MCF 10A (cell line): ENCODE measurements at regions of chr6 and their contacts with region 1.

Region 1: DNA sequence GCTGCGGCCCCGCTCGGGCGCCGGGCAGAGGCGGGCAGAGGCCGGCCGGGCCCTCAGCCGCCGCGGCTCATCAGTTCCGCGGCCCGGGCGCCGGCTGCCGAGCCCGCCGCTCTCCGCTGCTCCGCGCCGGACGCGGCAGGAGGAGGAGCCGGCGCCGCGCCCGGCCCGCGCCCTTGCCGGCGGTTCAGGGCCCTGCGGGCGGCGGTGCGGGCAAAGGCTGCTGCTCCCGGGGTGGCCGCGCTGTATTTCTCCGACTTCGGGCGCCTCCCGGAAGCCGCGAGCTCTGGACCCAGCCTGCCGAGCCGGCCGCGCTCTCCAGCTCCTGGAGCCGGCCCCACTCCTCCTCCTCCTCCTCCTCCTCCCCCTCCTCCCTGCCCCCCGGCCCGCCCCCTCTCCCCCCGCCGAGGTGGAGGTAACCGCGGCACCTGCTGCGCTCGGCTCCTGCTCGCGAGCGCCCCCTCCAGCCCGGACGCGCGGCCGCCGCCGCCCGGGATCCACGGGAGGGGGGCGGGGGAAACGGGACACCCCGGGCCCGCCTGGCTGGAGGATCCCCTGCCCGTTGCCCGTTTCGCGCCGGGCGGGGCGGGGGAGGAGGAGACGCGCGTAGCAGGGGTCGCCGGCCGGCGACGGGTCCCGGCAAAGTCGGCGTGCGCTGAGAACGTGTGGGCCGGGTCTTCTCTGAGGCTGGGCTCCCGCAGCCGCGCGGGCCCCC is at the start of gene SLC22A23:
- DNase-seq: peak; percentile 69
- H3K4me3 Mint-ChIP-seq: peak within 1 kb of the TSS; percentile 75
- H3K27ac Mint-ChIP-seq: no peak within 1 kb of the TSS
- H3K4me1 Mint-ChIP-seq: peaks cover 7% of the 10 kb centered on the region
- H3K27me3 Mint-ChIP-seq: no peaks in the 10 kb centered on the region
- CTCF ChIP-seq: peak; percentile 79
- total RNA-seq, gene SLC22A23: 11.5 and 11.9 TPM in 2 replicates

Region 2: DNA sequence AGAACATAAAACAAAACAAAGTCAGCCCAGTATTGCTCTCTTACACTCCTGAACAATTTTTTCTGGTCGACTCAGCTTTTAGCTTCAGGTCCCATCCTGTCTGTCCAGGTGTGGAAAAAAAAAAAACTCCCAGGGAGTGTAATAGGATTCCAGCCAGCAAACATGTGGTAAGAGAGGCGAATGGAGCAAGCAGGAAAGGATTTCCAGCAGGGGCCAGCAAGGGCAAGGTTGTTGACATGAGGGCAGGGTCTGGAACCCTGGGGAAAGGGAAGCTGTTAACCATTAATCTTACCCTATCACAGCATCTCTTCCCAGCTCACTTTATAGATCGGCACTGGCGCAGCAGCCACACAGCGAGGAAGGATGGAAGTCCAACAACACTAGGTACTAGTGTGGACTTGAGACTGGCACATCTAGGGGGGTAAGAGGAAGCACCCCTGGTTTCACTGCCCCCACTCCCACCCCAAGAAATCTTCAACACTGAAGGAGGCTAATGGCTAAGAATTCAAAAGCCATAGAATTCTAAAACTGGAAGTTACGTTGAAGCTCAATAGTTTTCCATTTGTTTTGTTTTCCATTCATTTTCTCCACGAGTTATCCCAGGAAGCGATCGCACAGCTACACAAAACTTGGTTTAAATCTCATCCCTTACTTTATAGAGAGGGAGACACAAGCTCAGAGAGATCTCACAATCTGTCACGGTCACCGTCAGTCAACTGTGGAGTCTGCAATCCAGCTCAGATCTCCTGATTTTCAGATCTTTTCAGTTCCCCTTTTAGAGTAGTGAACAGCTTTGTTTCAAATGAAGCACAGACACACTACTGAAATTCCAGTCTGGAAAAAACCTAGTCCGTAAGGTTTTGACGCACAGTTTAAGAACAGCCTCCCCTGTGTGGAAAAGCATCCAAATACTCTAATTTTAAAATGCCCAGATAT is 53.4 kb before region 1 on chr6:
- CTCF ChIA-PET with region 1: interaction called, 15 read pairs
- POLR2A ChIA-PET with region 1: interaction called, 19 read pairs
- intact Hi-C with region 1: loop called (anchors 2 kb)
- DNase-seq: peak; percentile 72
- H3K4me3 Mint-ChIP-seq: no peak overlapping the region
- H3K27ac Mint-ChIP-seq: peak overlapping the region; percentile 61
- H3K4me1 Mint-ChIP-seq: peaks cover 40% of the 10 kb centered on the region
- H3K27me3 Mint-ChIP-seq: no peaks in the 10 kb centered on the region
- CTCF ChIP-seq: no peak

Region 3: DNA sequence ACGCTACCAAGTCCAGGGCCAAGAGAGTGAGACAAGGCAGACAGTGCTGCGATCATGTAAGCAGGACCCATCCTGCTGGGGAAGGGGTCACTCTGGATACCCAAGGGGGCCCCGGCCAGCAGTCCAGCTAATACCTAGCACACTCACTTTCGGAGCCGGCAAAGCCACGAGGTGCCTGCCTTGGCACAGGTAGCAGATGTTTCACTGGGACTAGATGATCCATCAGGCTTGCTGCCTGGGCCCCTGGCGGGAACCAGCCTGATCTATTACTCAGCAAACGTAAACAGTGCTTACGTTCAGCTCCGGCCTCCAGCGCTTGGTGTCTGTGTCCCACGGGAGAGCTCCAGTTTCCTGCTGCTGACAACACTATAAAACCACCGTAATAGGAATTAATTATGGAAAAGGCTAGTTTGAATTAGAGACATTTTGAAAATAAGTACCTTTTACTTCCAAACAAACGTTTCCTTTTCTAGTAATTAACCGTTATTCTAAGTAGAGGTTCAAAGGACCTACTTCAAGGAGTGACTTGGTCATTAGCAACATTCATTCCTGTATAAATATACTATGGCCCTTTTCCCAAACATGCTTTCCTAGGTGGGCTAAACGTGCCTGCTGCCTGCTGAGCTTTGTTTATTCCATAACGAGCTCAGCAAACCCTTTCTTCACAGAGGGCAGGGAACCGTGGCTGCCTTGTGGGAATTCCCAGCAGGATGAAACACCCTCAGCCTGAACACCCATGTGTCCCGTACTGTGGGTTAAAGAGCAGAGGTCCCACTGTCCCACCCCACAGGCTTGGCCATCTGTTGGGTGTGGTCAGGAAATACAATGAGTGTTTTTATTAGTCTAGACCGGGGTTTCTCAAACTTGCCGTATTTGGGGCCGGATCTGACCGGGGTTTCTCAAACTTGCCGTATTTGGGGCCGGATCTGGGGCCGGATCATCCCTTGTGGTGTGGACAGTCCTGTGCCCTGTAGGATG is 18.4 kb before region 1 on chr6:
- CTCF ChIA-PET with region 1: interaction called, 5 read pairs
- POLR2A ChIA-PET with region 1: interaction called, 11 read pairs
- intact Hi-C with region 1: no loop called
- DNase-seq: peak; percentile 77
- H3K4me3 Mint-ChIP-seq: no peak overlapping the region
- H3K27ac Mint-ChIP-seq: no peak overlapping the region
- H3K4me1 Mint-ChIP-seq: peaks cover 11% of the 10 kb centered on the region
- H3K27me3 Mint-ChIP-seq: no peaks in the 10 kb centered on the region
- CTCF ChIP-seq: no peak

Region 4: DNA sequence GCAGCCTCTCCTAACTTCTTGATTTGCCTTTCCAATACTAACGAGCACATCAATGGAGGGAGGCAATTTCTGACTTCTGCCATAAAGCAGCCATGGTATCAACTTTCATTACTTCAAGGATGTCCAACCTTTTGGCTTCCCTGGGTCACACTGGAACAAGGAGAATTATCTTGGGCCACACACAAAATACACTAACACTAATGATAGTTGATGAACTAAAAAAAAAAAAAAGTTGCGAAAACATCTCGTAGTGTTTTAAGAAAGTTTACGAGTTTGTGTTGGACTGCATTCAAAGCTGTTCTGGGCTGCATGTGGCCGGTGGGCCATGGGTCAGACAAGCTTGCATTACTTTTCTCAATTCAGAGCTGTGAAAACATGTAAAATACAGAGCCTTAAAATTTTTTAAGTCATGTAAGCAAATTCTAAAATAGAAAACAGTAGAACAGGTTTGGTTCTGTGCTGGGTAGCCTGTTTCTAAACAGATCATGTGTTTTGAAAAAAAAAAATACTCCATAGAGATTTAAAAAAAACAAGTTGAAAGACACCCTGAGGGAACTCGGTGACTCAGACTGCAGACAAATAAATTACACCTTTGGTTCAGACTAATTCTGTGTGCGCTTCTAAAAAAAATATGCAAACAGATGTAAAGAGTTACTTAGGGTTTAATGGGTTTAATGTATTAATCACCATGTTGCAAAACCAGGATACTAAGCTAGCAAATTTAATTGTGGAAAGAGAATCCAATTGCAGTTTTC is 43.5 kb after region 1 on chr6:
- CTCF ChIA-PET with region 1: interaction called, 6 read pairs
- POLR2A ChIA-PET with region 1: interaction called, 12 read pairs
- intact Hi-C with region 1: no loop called
- DNase-seq: peak; percentile 89
- H3K4me3 Mint-ChIP-seq: peak overlapping the region; percentile 39
- H3K27ac Mint-ChIP-seq: peak overlapping the region; percentile 74
- H3K4me1 Mint-ChIP-seq: peaks cover 15% of the 10 kb centered on the region
- H3K27me3 Mint-ChIP-seq: peaks cover 17% of the 10 kb centered on the region
- CTCF ChIP-seq: no peak

Region 5: DNA sequence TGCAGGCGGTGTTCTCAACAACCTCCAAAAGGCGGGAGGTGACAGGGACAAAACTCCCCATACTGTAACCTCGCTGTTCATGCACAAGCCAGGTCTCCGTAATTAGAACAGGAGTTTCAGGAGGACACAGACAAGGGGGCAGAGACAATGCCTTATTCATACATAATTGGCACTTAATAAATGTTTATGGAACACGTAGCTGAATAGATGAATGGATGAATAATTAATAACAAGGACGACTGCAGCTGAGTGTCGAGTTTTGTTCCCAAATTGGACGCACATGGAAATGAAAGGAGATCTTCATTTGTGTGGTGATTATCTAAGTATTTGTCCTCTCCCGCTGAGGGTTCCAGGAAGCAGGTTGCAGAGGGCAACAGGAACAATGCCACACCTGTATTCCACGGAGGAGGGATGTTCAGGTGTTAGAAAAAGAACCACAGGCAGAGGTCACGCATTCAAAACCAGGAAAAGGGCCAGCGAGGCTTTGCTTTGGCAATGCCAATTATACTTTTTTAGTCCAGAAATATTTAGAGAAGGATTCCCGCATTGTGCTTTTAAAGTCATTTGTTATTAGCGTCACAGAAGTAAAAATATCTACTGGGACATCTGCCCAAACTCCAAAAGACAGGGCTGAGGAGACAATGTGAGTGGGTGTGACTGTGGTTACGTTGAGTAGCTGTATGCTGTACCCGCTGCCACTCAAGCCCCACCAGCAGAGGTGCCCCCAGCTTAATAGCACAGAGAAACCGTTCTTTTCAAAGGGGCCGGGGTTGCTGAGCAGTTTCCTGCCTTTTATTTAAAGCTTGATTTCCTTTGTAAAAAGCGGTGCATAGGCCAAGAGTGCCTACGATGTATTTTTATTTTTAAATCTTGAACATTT is 171.3 kb after region 1 on chr6:
- CTCF ChIA-PET with region 1: no interaction called
- POLR2A ChIA-PET with region 1: no interaction called
- intact Hi-C with region 1: no loop called
- DNase-seq: no peak
- H3K4me3 Mint-ChIP-seq: no peak overlapping the region
- H3K27ac Mint-ChIP-seq: no peak overlapping the region
- H3K4me1 Mint-ChIP-seq: peaks cover 6% of the 10 kb centered on the region
- H3K27me3 Mint-ChIP-seq: no peaks in the 10 kb centered on the region
- CTCF ChIP-seq: no peak

Region 6: GRCh38 chr6:3732345-3733141 is 275.6 kb after region 1 on chr6:
- CTCF ChIA-PET with region 1: interaction called, 12 read pairs
- POLR2A ChIA-PET with region 1: interaction called, 6 read pairs
- intact Hi-C with region 1: loop called (anchors 1 kb)
- DNase-seq: peak; percentile 80
- H3K4me3 Mint-ChIP-seq: no peak overlapping the region
- H3K27ac Mint-ChIP-seq: no peak overlapping the region
- H3K4me1 Mint-ChIP-seq: peaks cover 9% of the 10 kb centered on the region
- H3K27me3 Mint-ChIP-seq: no peaks in the 10 kb centered on the region
- CTCF ChIP-seq: peak; percentile 94

Region 7: GRCh38 chr6:3956054-3956453 is 499.1 kb after region 1 on chr6:
- CTCF ChIA-PET with region 1: no interaction called
- POLR2A ChIA-PET with region 1: no interaction called
- intact Hi-C with region 1: no loop called
- DNase-seq: no peak
- H3K4me3 Mint-ChIP-seq: no peak overlapping the region
- H3K27ac Mint-ChIP-seq: no peak overlapping the region
- H3K4me1 Mint-ChIP-seq: no peaks in the 10 kb centered on the region
- H3K27me3 Mint-ChIP-seq: no peaks in the 10 kb centered on the region
- CTCF ChIP-seq: no peak